ENCODE measurements at regions of chr1 and their contacts with region 1.

Region 1: DNA sequence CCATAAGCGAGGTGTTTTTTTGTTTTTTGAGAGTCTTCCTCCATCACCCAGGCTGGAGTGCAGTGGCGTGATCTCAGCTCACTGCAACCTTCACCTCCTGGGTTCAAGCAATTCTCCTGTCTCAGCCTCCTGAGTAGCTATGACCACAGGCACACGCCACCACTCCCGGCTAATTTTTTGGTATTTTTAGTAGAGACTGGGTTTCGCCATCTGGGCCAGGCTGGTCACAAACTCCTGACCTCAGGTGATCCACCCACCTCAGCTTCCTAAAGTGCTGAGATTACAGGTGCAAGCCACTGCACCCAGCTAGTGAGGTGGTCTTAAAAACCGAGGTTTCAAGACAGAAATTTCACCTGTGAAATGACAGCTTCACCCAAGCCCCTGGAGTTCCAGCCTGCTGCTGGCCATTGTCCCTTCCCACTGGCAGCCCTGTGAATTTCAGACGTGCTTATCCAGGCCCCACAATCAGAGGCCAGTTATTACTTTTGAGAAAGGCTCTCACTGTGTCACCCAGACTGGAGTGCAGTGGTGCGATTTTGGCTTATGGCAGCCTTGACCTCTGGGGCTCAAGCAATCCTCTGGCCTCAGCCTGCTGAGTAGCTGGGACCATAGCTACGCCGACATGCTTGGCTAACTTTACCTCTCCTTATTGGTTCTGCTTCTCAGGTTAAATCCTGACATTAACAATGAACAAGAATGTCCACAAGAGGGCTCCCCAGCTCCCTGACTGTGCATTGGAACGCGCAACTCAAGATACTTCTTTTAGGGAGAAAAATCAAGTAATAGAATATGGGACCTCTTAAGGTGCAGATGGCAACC is 19.4 kb downstream of the ENO1 start:
- DNase-seq: peak; percentile 51
- CTCF ChIP-seq: peak; percentile 57

Region 2: GRCh38 chr1:8560611-8561544 is 298.2 kb before region 1 on chr1:
- in situ Hi-C with region 1: loop called (anchors 10 kb)
- DNase-seq: peak; percentile 30
- CTCF ChIP-seq: peak; percentile 80